ENCODE measurements at regions of chr9 and their contacts with region 1.

Region 1: GRCh38 chr9:35657546-35658136 is at the start of gene RMRP:
- DNase-seq: peak; percentile 96
- ATAC-seq: peak; percentile 88
- H3K4me3 ChIP-seq: peak within 1 kb of the TSS; percentile 96
- H3K27ac ChIP-seq: peak within 1 kb of the TSS; percentile 98
- H3K4me1 ChIP-seq: peaks cover 29% of the 10 kb centered on the region
- H3K27me3 ChIP-seq: no peaks in the 10 kb centered on the region
- CTCF ChIP-seq: no peak
- total RNA-seq, gene RMRP: 23,421 and 36,790 TPM in 2 replicates

Region 2: GRCh38 chr9:35696525-35697215 is 39.0 kb after region 1 on chr9:
- CTCF ChIA-PET with region 1: interaction called, 8 read pairs
- POLR2A ChIA-PET with region 1: no interaction called
- intact Hi-C with region 1: loop called (anchors 5 kb)
- DNase-seq: peak; percentile 49
- ATAC-seq: peak; percentile 67
- H3K4me3 ChIP-seq: no peak overlapping the region
- H3K27ac ChIP-seq: peak overlapping the region; percentile 63
- H3K4me1 ChIP-seq: peaks cover 12% of the 10 kb centered on the region
- H3K27me3 ChIP-seq: no peaks in the 10 kb centered on the region
- CTCF ChIP-seq: peak; percentile 73

Region 3: DNA sequence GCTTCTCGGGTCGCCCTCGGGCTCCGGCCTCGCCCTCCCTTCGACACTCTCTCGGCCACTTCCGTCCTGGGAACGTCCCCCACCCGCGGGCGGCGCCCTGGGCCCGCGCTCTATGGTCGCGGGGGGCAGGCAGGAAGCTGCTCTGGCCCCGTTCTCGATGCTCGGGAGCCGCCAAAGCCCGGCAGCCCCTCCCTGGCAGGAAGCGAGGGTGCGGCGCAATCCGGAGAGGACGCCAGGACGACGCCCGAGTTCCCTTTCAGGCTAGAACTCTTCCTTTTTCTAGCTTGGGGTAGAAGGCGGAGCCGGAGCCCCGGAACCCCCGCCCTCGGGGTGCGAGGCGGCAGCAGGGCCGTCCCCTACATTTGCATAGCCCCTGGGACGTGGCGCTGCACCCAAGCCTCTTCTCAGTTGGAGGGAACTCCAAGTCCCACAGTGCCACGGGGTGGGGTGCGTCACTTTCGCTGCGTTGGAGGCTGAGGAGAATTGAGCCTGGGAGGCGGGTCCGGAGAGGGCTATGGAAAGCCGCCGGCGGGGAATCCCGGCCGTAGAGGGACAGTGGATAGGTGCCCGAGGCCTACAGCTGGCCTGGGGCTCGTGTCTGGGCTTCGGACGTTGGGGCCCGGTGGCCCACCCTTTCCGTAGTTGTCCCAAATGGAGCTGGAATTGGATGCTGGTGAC is 74.6 kb after region 1 on chr9 and contains the starts of genes CREB3 and TLN1:
- CTCF ChIA-PET with region 1: interaction called, 3 read pairs
- POLR2A ChIA-PET with region 1: interaction called, 5 read pairs
- intact Hi-C with region 1: loop called (anchors 2 kb)
- DNase-seq: peak; percentile 96
- ATAC-seq: peak; percentile 74
- H3K4me3 ChIP-seq: peak within 1 kb of the TSS; percentile 90
- H3K27ac ChIP-seq: peak within 1 kb of the TSS; percentile 84
- H3K4me1 ChIP-seq: peaks cover 53% of the 10 kb centered on the region
- H3K27me3 ChIP-seq: no peaks in the 10 kb centered on the region
- CTCF ChIP-seq: peak; percentile 21; the same call in 1 of the 2 replicates
- total RNA-seq, gene CREB3: 34.8 and 47.1 TPM in 2 replicates
- total RNA-seq, gene TLN1: 118 and 153 TPM in 2 replicates

Region 4: DNA sequence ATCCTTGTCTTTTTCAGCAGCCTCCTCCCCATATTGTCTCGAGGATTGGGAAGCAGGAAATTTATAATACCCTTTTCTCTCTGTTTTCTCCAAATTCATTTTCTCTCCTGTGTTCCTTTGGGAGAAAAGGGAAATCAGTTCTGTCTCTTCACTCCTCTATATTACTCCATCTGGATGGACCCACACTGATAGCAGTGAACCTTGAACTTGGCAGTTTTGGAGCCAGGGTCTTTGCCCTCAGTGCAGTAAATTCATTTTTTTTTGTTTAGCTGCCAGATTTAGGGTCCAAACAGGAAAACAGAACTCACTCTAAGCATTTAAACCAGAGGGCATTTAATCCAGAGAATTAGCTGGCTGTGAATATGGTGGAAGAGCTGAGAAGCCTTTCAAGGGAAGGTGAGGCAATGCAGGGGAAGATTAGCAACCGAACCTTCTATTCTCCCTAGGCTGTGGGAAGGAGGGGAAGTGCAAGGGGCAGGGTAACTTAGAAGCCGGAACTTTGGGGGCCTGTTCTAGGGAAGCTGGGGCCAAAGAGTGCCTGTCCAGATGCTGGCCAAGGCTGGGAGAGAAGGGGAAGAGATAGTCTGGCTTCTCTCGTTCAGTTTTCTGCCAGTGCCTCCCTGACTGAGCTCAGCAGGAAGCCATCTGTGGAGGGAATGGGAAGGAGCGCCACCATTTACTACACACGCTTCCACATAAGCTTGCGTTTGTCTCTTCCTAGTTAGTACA is 117.4 kb after region 1 on chr9:
- CTCF ChIA-PET with region 1: no interaction called
- POLR2A ChIA-PET with region 1: interaction called, 12 read pairs
- intact Hi-C with region 1: no loop called
- DNase-seq: no peak
- ATAC-seq: no peak
- H3K4me3 ChIP-seq: no peak overlapping the region
- H3K27ac ChIP-seq: no peak overlapping the region
- H3K4me1 ChIP-seq: peaks cover 34% of the 10 kb centered on the region
- H3K27me3 ChIP-seq: no peaks in the 10 kb centered on the region
- CTCF ChIP-seq: no peak

Measured in PC-3 (cell line).